MCF 10A (cell line): ENCODE measurements at regions of chr5 and their contacts with region 1.

Region 1: DNA sequence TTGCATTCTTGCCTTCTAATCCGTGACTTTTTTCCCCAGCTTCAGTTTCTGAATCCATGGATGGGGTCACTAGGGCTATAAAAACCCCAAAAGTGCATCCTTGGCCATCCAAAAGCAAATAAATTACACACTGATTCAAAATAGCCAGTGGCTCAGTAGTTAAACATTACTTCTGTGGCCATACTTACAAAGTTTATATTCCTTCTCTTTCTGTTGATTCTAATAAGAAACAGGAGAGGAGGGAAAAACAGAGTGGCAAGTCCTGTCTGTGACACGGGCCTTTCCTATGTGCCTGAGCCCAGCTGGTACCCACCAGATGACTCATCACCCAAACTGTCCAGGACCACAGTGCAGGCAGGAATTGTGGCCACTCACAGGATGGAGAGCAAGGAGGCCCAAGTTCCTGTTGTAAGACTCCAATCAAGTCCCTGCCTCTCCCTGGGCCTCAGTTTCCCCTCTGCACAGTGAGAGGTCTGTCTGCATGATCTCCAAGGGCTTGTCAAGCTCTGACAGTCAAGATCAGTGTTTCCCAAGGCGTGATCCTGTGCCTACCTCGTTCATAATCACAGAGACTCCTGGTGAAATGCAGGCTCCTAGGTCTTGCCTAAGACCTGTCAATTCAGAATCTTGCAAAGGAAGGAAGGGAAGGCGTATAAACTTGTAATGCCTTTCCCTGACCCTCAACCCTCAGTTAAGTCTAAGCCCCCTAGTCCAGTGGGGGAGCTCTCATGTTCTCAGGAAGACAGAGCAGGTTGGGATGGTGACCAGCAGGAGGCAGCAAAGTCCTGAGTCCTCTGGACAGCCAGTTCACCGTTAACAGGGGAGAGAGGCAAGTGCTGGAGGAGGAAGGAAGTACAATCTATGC is 29.5 kb downstream of the TNIP1 start:
- DNase-seq: peak; percentile 83
- H3K4me3 Mint-ChIP-seq: no peak overlapping the region
- H3K27ac Mint-ChIP-seq: peak overlapping the region; percentile 62
- H3K4me1 Mint-ChIP-seq: no peaks in the 10 kb centered on the region
- H3K27me3 Mint-ChIP-seq: no peaks in the 10 kb centered on the region
- CTCF ChIP-seq: peak; percentile 89

Region 2: DNA sequence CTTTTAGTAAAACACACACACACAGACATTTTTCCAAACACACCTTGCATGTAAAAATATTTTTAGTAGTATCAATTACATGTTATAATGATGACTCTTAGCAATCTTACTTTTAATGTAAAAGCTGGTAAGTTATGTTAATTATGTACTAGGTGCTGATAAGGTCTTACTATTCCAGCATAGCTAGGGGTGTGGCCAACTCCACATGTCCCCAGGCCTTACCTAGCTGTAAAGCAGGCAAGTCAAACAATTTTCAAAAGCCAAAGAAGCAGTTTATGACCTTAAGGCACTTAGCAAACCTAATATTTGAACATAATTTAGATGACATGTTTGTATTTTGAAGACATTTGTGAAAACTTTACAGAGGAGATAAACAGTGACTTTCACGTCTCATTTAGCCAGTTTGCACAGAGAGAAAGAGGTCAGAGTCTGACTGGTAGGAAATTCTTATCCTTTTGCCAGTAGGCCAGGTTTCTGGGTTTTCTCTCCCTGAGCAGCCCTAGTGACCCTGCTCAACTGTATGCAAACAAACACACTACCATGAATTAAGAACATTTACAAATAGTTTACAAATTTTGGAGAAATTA is 57.4 kb before region 1 on chr5:
- CTCF ChIA-PET with region 1: interaction called, 160 read pairs
- POLR2A ChIA-PET with region 1: no interaction called
- intact Hi-C with region 1: no loop called
- DNase-seq: no peak
- H3K4me3 Mint-ChIP-seq: no peak overlapping the region
- H3K27ac Mint-ChIP-seq: no peak overlapping the region
- H3K4me1 Mint-ChIP-seq: no peaks in the 10 kb centered on the region
- H3K27me3 Mint-ChIP-seq: no peaks in the 10 kb centered on the region
- CTCF ChIP-seq: no peak

Region 3: GRCh38 chr5:151020304-151021110 is 30.8 kb before region 1 on chr5 and contains the start of gene GPX3:
- CTCF ChIA-PET with region 1: interaction called, 230 read pairs
- POLR2A ChIA-PET with region 1: interaction called, 3 read pairs
- intact Hi-C with region 1: no loop called
- DNase-seq: no peak
- H3K4me3 Mint-ChIP-seq: no peak within 1 kb of the TSS
- H3K27ac Mint-ChIP-seq: peak within 1 kb of the TSS; percentile 28
- H3K4me1 Mint-ChIP-seq: peaks cover 39% of the 10 kb centered on the region
- H3K27me3 Mint-ChIP-seq: no peaks in the 10 kb centered on the region
- CTCF ChIP-seq: no peak
- total RNA-seq, gene GPX3: not detected in 2 replicates

Region 4: GRCh38 chr5:151068433-151069197 is 17.3 kb after region 1 on chr5:
- CTCF ChIA-PET with region 1: interaction called, 332 read pairs
- POLR2A ChIA-PET with region 1: no interaction called
- intact Hi-C with region 1: no loop called
- DNase-seq: no peak
- H3K4me3 Mint-ChIP-seq: no peak overlapping the region
- H3K27ac Mint-ChIP-seq: peak overlapping the region; percentile 46
- H3K4me1 Mint-ChIP-seq: peaks cover 41% of the 10 kb centered on the region
- H3K27me3 Mint-ChIP-seq: no peaks in the 10 kb centered on the region
- CTCF ChIP-seq: no peak

Region 5: GRCh38 chr5:151093476-151093889 is 42.2 kb after region 1 on chr5:
- CTCF ChIA-PET with region 1: interaction called, 41 read pairs
- POLR2A ChIA-PET with region 1: interaction called, 3 read pairs
- intact Hi-C with region 1: no loop called
- DNase-seq: peak; percentile 98
- H3K4me3 Mint-ChIP-seq: peak overlapping the region; percentile 28
- H3K27ac Mint-ChIP-seq: peak overlapping the region; percentile 76
- H3K4me1 Mint-ChIP-seq: peaks cover 43% of the 10 kb centered on the region
- H3K27me3 Mint-ChIP-seq: no peaks in the 10 kb centered on the region
- CTCF ChIP-seq: no peak

Region 6: DNA sequence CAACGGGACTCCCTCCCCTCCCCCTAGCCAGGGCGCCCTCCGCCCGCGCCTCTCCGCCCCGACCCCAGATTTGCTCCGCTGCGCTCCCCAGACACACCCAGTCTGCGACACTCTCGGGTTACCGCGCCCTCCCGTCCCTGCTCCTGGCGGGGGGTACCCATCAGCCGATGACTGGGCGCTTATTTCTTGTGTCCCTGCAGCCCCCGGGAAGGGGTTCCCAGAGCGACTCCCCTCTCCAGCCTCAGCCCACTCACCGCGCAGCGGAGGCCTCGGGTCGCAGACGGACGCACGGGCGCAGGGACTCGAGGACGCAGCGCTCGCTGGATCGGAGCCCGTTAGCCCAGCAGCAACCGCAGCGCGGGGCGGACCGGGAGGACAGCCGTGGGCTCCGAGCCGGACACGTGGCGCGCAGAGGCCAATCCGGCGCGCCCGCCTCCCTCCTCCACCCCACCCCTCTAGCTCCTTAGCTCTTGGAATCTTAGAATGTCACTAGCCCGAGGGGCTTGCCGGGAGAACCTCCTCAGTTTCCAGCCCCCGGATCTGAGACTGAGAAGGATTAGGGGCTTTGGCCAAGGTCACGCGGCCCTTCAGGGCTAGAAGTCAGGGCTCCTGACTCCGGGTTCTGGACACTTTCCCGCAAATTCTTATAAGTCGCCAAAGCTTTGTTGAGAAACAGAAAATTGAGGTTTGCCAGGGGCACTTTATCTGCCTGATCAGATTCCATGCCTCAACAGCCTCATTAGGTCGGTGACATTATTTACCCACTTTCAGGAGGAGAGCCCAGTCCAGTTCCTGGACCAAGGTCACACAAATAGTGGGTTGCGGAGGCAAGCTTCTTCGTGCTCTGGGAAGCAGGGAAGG is 106.4 kb after region 1 on chr5 and contains the start of gene ANXA6:
- CTCF ChIA-PET with region 1: interaction called, 48 read pairs
- POLR2A ChIA-PET with region 1: no interaction called
- intact Hi-C with region 1: no loop called
- DNase-seq: peak; percentile 81
- H3K4me3 Mint-ChIP-seq: peak within 1 kb of the TSS; percentile 64
- H3K27ac Mint-ChIP-seq: no peak within 1 kb of the TSS
- H3K4me1 Mint-ChIP-seq: peaks cover 9% of the 10 kb centered on the region
- H3K27me3 Mint-ChIP-seq: peaks cover 37% of the 10 kb centered on the region
- CTCF ChIP-seq: no peak
- total RNA-seq, gene ANXA6: 2.6 TPM in 2 replicates

Region 7: DNA sequence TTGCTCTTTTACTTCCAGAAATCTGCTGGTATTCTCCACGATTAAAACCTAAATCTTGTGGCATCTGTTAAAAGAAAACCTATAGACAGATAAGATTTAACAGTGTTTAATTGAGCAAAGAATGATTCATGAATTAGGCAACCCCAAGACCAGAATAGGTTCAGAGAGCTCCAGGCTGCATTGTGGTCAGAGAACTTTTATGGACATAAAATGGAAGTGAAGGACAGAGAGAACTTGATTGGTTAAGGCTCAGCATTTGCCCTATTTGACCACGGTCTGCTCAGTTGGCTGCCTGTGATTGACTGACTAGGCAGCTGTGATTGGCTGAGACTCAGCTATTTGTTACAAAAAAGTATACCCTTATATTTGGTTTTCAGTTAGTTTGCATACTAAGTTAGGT is 306.5 kb after region 1 on chr5:
- CTCF ChIA-PET with region 1: no interaction called
- POLR2A ChIA-PET with region 1: no interaction called
- intact Hi-C with region 1: no loop called
- DNase-seq: peak; percentile 58
- H3K4me3 Mint-ChIP-seq: no peak overlapping the region
- H3K27ac Mint-ChIP-seq: no peak overlapping the region
- H3K4me1 Mint-ChIP-seq: no peaks in the 10 kb centered on the region
- H3K27me3 Mint-ChIP-seq: peaks cover 12% of the 10 kb centered on the region
- CTCF ChIP-seq: no peak